ENCODE measurements at regions of chr3 and their contacts with region 1.

Region 1: DNA sequence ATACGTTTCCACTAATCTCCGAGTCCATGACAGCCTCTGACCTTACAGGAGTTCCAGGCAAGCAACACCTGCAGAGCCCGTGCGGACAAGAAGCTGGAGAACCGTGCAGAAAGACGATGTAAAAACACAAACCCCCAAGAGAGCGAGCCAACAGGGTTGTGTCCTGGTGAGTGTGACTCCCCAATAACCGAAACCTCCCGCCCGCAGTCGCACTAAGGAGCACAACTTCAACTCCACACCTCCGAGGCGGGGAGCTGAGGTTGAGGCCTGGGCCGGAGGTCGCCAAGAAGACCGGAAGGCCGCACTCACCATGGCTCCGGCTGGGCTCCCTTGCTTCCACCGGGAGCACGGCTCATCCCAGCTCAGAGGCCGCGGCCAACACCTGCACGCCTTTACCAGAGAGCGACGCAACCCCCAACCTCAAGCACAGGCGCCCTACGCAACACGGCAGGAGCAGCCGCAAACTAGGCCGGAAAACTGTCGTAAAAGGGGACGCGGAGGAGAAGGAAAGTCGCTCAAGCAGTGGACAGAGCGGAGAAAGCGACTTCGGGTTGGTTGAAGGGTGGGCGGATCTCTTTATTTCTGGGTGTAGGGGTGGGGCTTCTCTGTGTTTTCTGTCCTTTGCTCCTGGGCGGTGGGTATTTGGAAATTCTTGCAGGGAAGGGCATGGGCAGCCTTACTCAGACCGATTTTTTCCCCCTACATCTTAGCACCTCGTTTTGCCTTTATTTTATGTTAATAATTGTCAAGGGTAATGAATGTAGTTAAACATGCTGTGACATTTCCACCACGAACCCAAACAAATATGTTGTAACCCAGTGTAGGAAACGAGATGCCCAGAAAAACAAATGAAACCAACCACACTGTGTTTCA is at the start of gene DNAJC19:
- DNase-seq: peak; percentile 93 to 96 (median 94)
- H3K4me3 ChIP-seq: peak within 1 kb of the TSS; percentile 94 to 98
- H3K4me3 Mint-ChIP-seq: peak within 1 kb of the TSS; percentile 93 to 100 (median 98)
- H3K27ac ChIP-seq: peak within 1 kb of the TSS; percentile 70
- H3K27ac Mint-ChIP-seq: peak within 1 kb of the TSS; percentile 92 to 98 (median 97)
- H3K4me1 ChIP-seq: peaks cover 31% of the 10 kb centered on the region
- H3K4me1 Mint-ChIP-seq: peaks cover 12 to 47% (median 33%) of the 10 kb centered on the region in 4 donors
- H3K27me3 ChIP-seq: no peaks in the 10 kb centered on the region
- H3K27me3 Mint-ChIP-seq: peaks cover 0 to 6% of the 10 kb centered on the region in 2 donors
- total RNA-seq, gene DNAJC19: 59.7 to 60.1 TPM

Region 2: DNA sequence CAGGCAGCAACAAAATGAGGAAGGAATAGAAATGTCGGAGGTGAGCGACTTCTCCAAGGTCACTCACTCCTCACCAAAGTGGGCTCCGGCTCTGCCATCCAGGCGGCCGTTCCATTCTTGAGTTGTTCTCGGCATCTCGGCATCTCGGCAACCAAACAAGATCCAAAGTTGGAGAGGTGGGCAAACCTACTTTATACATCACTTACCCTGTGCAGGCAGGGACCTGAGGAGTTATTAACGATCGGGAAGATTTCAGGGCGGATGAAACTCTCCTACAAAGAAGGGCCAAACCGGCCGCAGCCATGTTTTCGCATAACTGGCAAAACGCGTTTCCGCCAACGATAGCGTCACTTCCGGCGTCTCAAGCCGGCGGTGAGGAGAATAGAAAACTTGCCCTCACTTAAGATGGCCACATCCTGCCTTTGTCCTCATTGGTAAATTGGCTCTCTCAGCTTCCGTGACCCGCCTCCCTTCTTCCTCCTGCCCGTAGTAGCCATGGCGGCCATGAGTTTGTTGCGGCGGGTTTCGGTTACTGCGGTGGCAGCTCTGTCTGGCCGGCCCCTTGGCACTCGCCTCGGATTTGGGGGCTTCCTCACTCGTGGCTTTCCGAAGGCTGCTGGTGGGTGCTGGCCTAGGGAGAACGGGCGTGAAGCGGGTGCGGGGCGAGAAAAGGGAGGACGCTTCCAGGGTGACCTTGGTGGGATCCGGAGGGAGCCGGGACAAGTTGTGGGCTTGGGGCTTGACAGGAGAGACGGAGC is 1385.0 kb before region 1 on chr3 and contains the starts of genes MRPL47 and NDUFB5:
- CTCF ChIA-PET with region 1: no interaction called
- POLR2A ChIA-PET with region 1: interaction called, 3 read pairs
- intact Hi-C with region 1: loop called (anchors 1 kb)
- DNase-seq: peak; percentile 89 to 97 (median 92)
- H3K4me3 ChIP-seq: peak within 1 kb of the TSS; percentile 82 to 97
- H3K4me3 Mint-ChIP-seq: peak within 1 kb of the TSS; percentile 98 to 99 (median 99)
- H3K27ac ChIP-seq: peak within 1 kb of the TSS; percentile 97
- H3K27ac Mint-ChIP-seq: peak within 1 kb of the TSS; percentile 97 to 100 (median 99)
- H3K4me1 ChIP-seq: peaks cover 37% of the 10 kb centered on the region
- H3K4me1 Mint-ChIP-seq: peaks cover 23 to 56% (median 38%) of the 10 kb centered on the region in 4 donors
- H3K27me3 ChIP-seq: no peaks in the 10 kb centered on the region
- H3K27me3 Mint-ChIP-seq: no peaks in the 10 kb centered on the region
- total RNA-seq, gene MRPL47: 16.9 to 17.3 TPM
- total RNA-seq, gene NDUFB5: 55.7 to 63.6 TPM

Region 3: GRCh38 chr3:180601688-180602666 is 387.6 kb before region 1 on chr3 and contains the start of gene TTC14:
- CTCF ChIA-PET with region 1: interaction called, 3 read pairs
- POLR2A ChIA-PET with region 1: interaction called, 8 read pairs
- intact Hi-C with region 1: loop called (anchors 5 kb)
- DNase-seq: peak; percentile 92 to 94 (median 93)
- H3K4me3 ChIP-seq: peak within 1 kb of the TSS; percentile 67 to 89
- H3K4me3 Mint-ChIP-seq: peak within 1 kb of the TSS; percentile 90 to 98 (median 96)
- H3K27ac ChIP-seq: peak within 1 kb of the TSS; percentile 89
- H3K27ac Mint-ChIP-seq: peak within 1 kb of the TSS; percentile 95 to 99 (median 97)
- H3K4me1 ChIP-seq: peaks cover 30% of the 10 kb centered on the region
- H3K4me1 Mint-ChIP-seq: peaks cover 19 to 42% (median 26%) of the 10 kb centered on the region in 4 donors
- H3K27me3 ChIP-seq: no peaks in the 10 kb centered on the region
- H3K27me3 Mint-ChIP-seq: peaks cover 5 to 6% of the 10 kb centered on the region in 2 donors
- total RNA-seq, gene TTC14: 168 to 177 TPM

Region 4: DNA sequence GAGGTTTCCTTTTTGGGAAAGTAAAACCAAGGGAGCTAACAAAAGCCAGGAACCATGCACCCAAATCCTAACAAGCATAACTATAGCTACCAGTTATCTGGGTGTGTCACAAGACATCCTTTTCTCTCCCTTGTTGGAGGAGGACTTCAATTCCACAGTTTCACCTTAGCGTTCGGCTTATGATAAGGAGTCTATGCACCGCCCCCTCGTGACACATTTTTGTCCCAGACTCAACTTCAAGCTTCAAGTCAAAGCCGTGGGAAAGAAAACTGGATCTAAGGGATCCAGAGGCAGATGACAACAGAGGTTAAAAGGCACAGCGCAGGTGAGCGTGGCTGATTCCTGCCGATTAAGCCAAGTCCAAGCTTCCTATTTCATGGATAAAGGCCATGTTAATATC is 91.0 kb before region 1 on chr3:
- CTCF ChIA-PET with region 1: no interaction called
- POLR2A ChIA-PET with region 1: no interaction called
- intact Hi-C with region 1: no loop called
- DNase-seq: no peak
- H3K4me3 ChIP-seq: no peak overlapping the region
- H3K4me3 Mint-ChIP-seq: no peak overlapping the region
- H3K27ac ChIP-seq: no peak overlapping the region
- H3K27ac Mint-ChIP-seq: no peak overlapping the region
- H3K4me1 ChIP-seq: no peaks in the 10 kb centered on the region
- H3K4me1 Mint-ChIP-seq: peaks cover 0 to 1% (median 0%) of the 10 kb centered on the region in 4 donors
- H3K27me3 ChIP-seq: no peaks in the 10 kb centered on the region
- H3K27me3 Mint-ChIP-seq: peaks cover 1 to 7% of the 10 kb centered on the region in 2 donors

Region 5: DNA sequence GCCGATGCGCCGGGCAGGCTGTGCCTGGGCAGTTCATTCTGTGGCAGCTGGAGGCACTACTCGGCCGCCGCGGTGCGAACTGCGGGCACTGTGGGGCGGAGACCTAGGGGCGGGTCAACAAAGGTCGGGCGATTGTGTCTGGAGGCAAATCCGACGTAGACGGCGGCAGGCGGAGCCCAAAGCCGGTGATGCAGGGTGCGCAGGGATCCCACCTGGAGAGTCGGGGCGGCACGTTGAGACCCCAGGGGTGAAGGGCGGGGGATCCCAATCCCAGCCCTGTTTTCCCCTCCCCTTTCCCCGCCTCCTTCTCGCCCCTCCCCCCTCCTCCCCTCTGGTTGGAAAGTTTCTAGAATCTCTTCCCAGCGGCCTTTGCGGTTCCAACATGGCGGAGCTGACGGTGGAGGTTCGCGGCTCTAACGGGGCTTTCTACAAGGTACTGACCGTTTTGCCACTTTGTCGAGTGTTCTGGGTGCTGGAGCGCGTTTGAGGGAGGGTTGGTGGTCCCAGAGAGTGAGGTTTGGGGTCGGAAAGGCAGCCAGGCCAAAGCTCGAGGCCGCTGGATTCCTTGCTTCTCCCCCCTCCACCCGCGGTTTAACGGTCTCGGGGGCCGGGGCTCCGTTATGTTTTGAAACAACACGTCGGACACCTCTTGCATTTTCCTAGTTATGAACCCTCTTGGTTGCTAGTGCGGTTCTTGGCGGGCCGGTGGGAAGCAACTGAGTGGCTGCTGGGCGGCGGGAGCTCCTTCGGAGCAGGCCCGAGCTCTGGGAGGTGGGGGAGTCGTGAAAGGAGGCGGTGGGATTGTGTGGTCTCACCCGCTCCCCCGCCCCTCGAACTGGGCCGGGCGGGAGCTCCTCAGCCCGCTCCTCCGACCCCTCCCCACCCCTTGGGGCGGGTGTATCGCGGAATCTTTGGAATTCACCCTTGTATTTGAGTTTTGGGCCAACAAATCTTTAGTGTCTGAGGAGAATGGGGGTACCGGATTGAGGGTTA is 76.9 kb before region 1 on chr3 and contains the start of gene FXR1:
- CTCF ChIA-PET with region 1: interaction called, 14 read pairs
- POLR2A ChIA-PET with region 1: interaction called, 17 read pairs
- intact Hi-C with region 1: loop called (anchors 1 kb)
- DNase-seq: peak; percentile 89 to 91 (median 90)
- H3K4me3 ChIP-seq: peak within 1 kb of the TSS; percentile 77 to 98
- H3K4me3 Mint-ChIP-seq: peak within 1 kb of the TSS; percentile 91 to 97 (median 96)
- H3K27ac ChIP-seq: peak within 1 kb of the TSS; percentile 98
- H3K27ac Mint-ChIP-seq: peak within 1 kb of the TSS; percentile 95 to 99 (median 98)
- H3K4me1 ChIP-seq: peaks cover 51% of the 10 kb centered on the region
- H3K4me1 Mint-ChIP-seq: peaks cover 38 to 69% (median 55%) of the 10 kb centered on the region in 4 donors
- H3K27me3 ChIP-seq: no peaks in the 10 kb centered on the region
- H3K27me3 Mint-ChIP-seq: no peaks in the 10 kb centered on the region
- total RNA-seq, gene FXR1: 131 TPM

Region 6: GRCh38 chr3:180947761-180948633 is 41.5 kb before region 1 on chr3:
- CTCF ChIA-PET with region 1: no interaction called
- POLR2A ChIA-PET with region 1: interaction called, 3 read pairs
- intact Hi-C with region 1: loop called (anchors 5 kb)
- DNase-seq: no peak
- H3K4me3 ChIP-seq: no peak overlapping the region
- H3K4me3 Mint-ChIP-seq: no peak overlapping the region
- H3K27ac ChIP-seq: no peak overlapping the region
- H3K27ac Mint-ChIP-seq: peak overlapping the region in 1 of 7 donors; percentile 15
- H3K4me1 ChIP-seq: no peaks in the 10 kb centered on the region
- H3K4me1 Mint-ChIP-seq: peaks cover 8 to 23% (median 13%) of the 10 kb centered on the region in 4 donors
- H3K27me3 ChIP-seq: no peaks in the 10 kb centered on the region
- H3K27me3 Mint-ChIP-seq: no peaks in the 10 kb centered on the region

Region 7: DNA sequence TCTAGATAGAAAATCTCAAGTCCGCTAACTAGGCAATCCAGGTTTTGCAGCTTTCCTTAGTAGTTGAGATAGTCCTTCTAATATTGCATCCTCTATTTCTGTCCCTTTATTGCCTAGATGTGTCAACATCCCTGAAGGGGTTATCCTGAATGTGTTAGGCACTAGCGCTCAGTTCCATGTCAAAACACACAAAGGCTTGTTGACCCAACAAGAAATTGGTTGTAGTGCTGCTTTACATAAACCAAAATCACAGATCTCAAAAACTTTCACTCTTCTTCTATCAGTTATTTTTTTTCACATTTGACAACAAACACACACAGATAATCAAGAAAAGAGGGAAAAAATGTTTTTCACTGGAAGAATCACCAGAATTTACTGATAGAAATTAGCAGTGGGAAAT is 670.8 kb after region 1 on chr3:
- CTCF ChIA-PET with region 1: no interaction called
- POLR2A ChIA-PET with region 1: no interaction called
- intact Hi-C with region 1: no loop called
- DNase-seq: no peak
- H3K4me3 ChIP-seq: no peak overlapping the region
- H3K4me3 Mint-ChIP-seq: no peak overlapping the region
- H3K27ac ChIP-seq: no peak overlapping the region
- H3K27ac Mint-ChIP-seq: no peak overlapping the region
- H3K4me1 ChIP-seq: no peaks in the 10 kb centered on the region
- H3K4me1 Mint-ChIP-seq: no peaks in the 10 kb centered on the region
- H3K27me3 ChIP-seq: no peaks in the 10 kb centered on the region
- H3K27me3 Mint-ChIP-seq: no peaks in the 10 kb centered on the region

Region 8: DNA sequence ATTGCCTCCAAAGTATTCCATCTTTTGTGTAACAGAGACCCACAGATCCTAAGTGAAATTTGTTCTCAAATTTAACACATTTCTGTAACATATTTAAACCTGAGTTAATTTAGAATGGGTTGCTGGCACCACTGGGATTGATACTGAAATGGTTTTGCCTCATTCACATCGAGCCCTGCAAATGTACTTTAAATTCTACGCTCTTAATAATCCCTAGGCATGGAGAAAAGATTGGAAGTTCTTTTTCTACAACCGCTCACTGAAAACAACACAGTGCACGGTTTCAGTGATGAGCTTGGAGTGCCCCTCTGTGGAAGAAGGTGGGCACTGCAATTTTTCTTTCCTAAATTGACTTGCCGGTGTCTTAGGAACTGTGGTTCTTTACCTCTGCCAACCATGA is 1693.9 kb after region 1 on chr3:
- CTCF ChIA-PET with region 1: no interaction called
- POLR2A ChIA-PET with region 1: no interaction called
- intact Hi-C with region 1: loop called (anchors 10 kb)
- DNase-seq: peak; percentile 37 to 64 (median 51)
- H3K4me3 ChIP-seq: no peak overlapping the region
- H3K4me3 Mint-ChIP-seq: peak overlapping the region; percentile 30 to 88 (median 71)
- H3K27ac ChIP-seq: no peak overlapping the region
- H3K27ac Mint-ChIP-seq: peak overlapping the region in 1 of 7 donors; percentile 36
- H3K4me1 ChIP-seq: peaks cover 15% of the 10 kb centered on the region
- H3K4me1 Mint-ChIP-seq: peaks cover 6 to 10% (median 8%) of the 10 kb centered on the region in 4 donors
- H3K27me3 ChIP-seq: peaks cover 7% of the 10 kb centered on the region
- H3K27me3 Mint-ChIP-seq: peaks cover 30% of the 10 kb centered on the region in 2 donors